Activated B cell treated with CpG ODN at 0.5 μM for 24 hours (primary cell): ENCODE measurements at regions of chr16 and their contacts with region 1.

Region 1: DNA sequence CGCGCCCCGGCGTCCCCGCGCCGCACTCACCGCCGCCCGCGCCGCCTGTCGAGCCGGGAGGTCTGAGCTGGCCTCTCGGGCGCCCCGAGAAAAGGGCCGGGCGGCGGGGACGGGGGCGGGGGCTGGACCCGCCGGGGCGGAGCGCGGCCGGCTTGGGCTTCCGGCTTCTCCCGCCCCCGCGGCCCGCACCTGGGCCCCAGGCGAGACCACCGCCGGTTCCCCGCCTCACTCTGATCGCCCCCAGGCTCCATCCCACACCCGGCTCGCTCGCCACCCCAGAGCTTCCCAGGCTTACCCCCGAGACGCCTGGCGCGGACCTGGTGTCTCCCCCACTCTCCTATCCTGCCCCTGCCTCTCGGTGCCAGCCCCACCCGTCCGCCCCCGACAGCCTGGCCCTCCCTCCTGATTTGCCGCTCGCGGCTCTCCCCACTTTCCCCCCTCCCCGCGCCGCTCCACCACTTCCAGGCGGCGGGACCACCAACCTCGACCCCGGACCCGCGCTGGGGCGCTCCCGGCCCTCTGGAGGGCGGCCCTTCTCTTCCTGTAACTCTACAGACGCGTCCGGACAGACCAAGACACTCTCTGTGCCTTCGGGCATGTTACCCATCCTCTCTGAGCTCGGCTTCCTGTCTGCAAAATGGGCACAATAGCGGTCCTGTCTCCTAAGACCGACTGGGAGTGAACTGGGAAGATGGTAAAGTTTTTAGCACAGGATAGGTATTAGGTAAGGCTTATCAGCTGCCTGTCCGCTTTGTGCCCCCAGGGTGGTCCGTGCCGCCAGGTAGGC is at the start of gene LITAF:
- DNase-seq: peak; percentile 71
- ATAC-seq: peak; percentile 60
- H3K4me3 Mint-ChIP-seq: peak within 1 kb of the TSS; percentile 91
- H3K27ac Mint-ChIP-seq: peak within 1 kb of the TSS; percentile 94
- H3K4me1 Mint-ChIP-seq: peaks cover 48% of the 10 kb centered on the region
- H3K27me3 Mint-ChIP-seq: no peaks in the 10 kb centered on the region
- CTCF ChIP-seq: no peak
- total RNA-seq, gene LITAF: 124 and 126 TPM in 2 replicates

Region 2: GRCh38 chr16:10949370-10949970 is 637.6 kb before region 1 on chr16:
- CTCF ChIA-PET with region 1: no interaction called
- POLR2A ChIA-PET with region 1: no interaction called
- intact Hi-C with region 1: loop called (anchors 2 kb)
- DNase-seq: peak; percentile 74
- ATAC-seq: peak; percentile 95
- H3K4me3 Mint-ChIP-seq: peak overlapping the region; percentile 75
- H3K27ac Mint-ChIP-seq: peak overlapping the region; percentile 94
- H3K4me1 Mint-ChIP-seq: peaks cover 70% of the 10 kb centered on the region
- H3K27me3 Mint-ChIP-seq: no peaks in the 10 kb centered on the region
- CTCF ChIP-seq: no peak

Region 3: GRCh38 chr16:11576427-11577289 is 10.4 kb before region 1 on chr16:
- CTCF ChIA-PET with region 1: interaction called, 3 read pairs
- POLR2A ChIA-PET with region 1: interaction called, 40 read pairs
- intact Hi-C with region 1: loop called (anchors 1 kb)
- DNase-seq: no peak
- ATAC-seq: peak; percentile 78
- H3K4me3 Mint-ChIP-seq: peak overlapping the region; percentile 52
- H3K27ac Mint-ChIP-seq: peak overlapping the region; percentile 62
- H3K4me1 Mint-ChIP-seq: peaks cover 90% of the 10 kb centered on the region
- H3K27me3 Mint-ChIP-seq: no peaks in the 10 kb centered on the region
- CTCF ChIP-seq: no peak

Region 4: GRCh38 chr16:11619327-11619851 is 32.3 kb after region 1 on chr16:
- CTCF ChIA-PET with region 1: interaction called, 4 read pairs
- POLR2A ChIA-PET with region 1: interaction called, 12 read pairs
- intact Hi-C with region 1: loop called (anchors 1 kb)
- DNase-seq: no peak
- ATAC-seq: peak; percentile 53
- H3K4me3 Mint-ChIP-seq: peak overlapping the region; percentile 28
- H3K27ac Mint-ChIP-seq: peak overlapping the region; percentile 63
- H3K4me1 Mint-ChIP-seq: peaks cover 54% of the 10 kb centered on the region
- H3K27me3 Mint-ChIP-seq: no peaks in the 10 kb centered on the region
- CTCF ChIP-seq: no peak

Region 5: DNA sequence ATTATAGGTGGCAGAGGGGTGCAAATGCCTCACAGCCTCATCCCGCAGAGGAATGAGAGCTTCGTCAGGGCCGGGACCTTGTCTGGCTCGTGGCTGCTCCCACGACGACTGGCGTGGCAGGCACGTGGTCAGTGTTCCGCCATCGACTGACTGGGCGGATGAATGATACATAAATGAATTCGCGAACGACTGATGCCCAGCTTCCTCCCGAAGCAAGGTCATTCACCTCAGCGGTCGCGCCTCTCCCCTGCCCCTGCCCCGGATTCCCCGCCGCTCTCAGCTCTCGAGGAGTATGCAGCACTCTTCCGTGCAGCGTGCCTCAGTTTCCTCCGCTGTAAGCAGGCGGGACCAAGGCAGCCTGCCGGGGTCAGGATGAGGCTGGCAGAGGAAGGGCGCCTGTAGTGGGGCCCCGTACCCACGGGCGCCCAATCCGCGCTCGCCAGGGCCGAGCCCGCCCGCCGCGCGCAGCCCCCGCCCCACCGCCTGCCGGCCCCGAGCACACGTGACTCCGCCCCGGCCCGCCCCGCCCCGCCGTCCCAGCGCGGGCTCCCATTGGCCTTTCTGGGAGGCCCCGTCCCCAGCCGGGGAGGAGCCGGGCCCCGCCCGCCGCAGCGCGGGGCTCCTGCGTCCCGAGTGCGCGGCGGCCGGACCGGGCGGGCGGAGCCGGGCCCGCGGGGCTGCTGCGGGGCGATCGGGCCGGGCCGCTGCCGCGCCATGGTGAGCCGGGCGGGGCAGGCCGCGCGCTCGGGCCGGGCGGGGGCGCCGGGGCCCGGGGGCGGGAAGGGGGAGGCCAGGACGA is 81.0 kb after region 1 on chr16 and contains the start of gene SNN:
- CTCF ChIA-PET with region 1: no interaction called
- POLR2A ChIA-PET with region 1: interaction called, 32 read pairs
- intact Hi-C with region 1: loop called (anchors 1 kb)
- DNase-seq: peak; percentile 86
- ATAC-seq: peak; percentile 79
- H3K4me3 Mint-ChIP-seq: peak within 1 kb of the TSS; percentile 90
- H3K27ac Mint-ChIP-seq: peak within 1 kb of the TSS; percentile 89
- H3K4me1 Mint-ChIP-seq: peaks cover 72% of the 10 kb centered on the region
- H3K27me3 Mint-ChIP-seq: no peaks in the 10 kb centered on the region
- CTCF ChIP-seq: no peak
- total RNA-seq, gene SNN: 31.9 and 32.1 TPM in 2 replicates

Region 6: DNA sequence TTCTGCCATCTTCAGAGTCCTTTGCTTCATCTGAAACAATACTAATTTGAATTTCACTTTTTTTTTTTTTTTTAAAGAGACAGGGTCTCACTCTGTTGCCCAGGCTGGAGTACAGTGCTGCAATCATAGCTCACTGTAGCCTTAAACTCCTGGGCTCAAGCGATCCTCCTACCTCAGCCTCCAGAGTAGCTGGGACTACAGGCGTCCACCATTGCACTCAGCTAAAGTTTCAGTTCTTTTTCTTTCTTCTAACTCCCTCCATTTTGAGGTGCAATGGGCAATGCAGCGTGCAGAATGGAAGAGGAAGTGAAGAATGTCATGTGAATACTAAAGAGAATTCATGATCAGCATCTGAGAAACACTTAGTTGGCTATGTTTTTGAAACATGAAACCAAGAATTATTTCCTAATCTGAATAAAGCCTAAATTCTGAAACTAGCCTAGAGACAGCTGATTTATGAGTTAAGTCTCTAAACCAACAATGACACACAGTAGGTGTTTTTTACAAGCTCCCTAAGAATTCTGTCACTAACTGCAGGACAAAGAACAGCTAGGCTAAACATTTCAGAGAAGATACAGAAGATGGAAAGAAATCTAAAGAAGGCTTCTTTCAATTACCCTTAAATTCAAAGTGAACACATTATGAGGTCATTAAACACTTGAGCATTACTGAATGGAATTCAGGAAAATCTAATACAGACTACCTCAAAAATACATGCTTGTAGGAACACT is 102.1 kb after region 1 on chr16:
- CTCF ChIA-PET with region 1: interaction called, 3 read pairs
- POLR2A ChIA-PET with region 1: interaction called, 5 read pairs
- intact Hi-C with region 1: loop called (anchors 2 kb)
- DNase-seq: no peak
- ATAC-seq: peak; percentile 98
- H3K4me3 Mint-ChIP-seq: peak overlapping the region; percentile 58
- H3K27ac Mint-ChIP-seq: peak overlapping the region; percentile 84
- H3K4me1 Mint-ChIP-seq: peaks cover 77% of the 10 kb centered on the region
- H3K27me3 Mint-ChIP-seq: no peaks in the 10 kb centered on the region
- CTCF ChIP-seq: no peak

Region 7: DNA sequence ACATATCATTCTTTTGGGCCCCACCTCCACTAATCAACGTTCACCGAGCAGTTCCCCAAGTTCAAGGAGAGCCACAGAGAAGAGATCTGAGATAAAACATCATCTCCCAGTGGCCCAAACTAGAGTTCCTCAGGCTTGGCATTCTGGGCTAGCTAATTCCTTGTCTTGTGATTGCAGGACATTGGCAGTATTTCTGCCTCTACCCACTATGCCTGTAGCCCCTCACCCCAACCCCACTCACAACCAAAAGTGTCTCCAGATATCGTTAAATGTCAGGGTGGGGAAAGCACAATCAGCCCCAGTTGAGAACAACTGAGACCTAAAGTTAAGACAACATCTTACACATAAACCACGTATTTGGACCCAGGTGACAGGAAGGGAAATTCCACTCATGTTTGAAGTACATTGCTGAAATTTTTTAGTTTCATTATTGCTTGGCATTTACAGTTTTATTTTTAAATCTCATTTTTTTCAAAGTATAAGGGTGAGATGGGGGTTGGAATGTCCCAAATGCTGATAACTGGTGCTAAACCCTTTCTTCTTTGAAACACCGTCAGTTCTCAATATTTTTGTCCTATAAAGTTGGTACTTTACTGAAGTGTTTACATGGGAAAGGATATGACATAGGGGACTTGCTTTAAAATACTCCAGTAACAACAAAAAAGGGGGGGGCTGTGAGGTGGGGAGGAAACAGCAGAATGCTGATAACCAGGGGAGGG is 196.4 kb after region 1 on chr16:
- CTCF ChIA-PET with region 1: no interaction called
- POLR2A ChIA-PET with region 1: interaction called, 9 read pairs
- intact Hi-C with region 1: loop called (anchors 5 kb)
- DNase-seq: peak; percentile 32
- ATAC-seq: peak; percentile 76
- H3K4me3 Mint-ChIP-seq: peak overlapping the region; percentile 80
- H3K27ac Mint-ChIP-seq: peak overlapping the region; percentile 98
- H3K4me1 Mint-ChIP-seq: peaks cover 73% of the 10 kb centered on the region
- H3K27me3 Mint-ChIP-seq: no peaks in the 10 kb centered on the region
- CTCF ChIP-seq: no peak